Left cardiac atrium (tissue), 4 donors: ENCODE measurements at regions of chr13 and their contacts with region 1.

Region 1: GRCh38 chr13:72808917-72809500 is 27.1 kb downstream of the PIBF1 start:
- DNase-seq: no peak
- ATAC-seq: no peak

Region 2: DNA sequence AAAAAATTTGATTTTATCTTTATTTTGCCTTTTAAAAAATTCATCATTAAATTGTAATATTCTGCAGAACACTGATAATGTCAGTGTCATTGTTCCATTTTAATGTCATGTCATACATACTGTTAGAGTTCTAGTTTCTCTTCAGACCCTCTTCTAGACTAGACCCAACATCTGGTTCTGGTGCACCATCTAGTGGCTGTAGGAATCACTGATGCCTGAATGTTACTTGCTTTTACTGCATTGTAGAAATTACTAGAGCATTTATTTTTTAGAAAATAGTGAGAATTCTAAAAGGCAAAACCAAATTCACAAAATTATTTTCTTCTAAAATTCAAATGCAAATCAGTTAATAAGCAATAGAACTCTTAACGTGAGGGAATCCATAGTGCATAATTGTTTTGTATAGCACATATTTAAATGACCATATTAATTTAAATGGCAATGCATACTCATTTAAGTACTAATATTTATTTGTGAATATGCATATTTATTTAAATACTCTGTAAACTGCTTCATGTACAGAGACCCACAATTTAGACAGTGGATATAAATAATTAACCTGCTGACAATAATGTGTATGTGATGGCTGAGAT is 899.5 kb after region 1 on chr13:
- intact Hi-C with region 1: loop called in 1 of 2 experiments (anchors 10 kb)
- DNase-seq: no peak
- ATAC-seq: peak; percentile 71 to 76